Dorsolateral prefrontal cortex (tissue), 120 donors: ENCODE measurements at regions of chr17 and their contacts with region 1.

Region 1: DNA sequence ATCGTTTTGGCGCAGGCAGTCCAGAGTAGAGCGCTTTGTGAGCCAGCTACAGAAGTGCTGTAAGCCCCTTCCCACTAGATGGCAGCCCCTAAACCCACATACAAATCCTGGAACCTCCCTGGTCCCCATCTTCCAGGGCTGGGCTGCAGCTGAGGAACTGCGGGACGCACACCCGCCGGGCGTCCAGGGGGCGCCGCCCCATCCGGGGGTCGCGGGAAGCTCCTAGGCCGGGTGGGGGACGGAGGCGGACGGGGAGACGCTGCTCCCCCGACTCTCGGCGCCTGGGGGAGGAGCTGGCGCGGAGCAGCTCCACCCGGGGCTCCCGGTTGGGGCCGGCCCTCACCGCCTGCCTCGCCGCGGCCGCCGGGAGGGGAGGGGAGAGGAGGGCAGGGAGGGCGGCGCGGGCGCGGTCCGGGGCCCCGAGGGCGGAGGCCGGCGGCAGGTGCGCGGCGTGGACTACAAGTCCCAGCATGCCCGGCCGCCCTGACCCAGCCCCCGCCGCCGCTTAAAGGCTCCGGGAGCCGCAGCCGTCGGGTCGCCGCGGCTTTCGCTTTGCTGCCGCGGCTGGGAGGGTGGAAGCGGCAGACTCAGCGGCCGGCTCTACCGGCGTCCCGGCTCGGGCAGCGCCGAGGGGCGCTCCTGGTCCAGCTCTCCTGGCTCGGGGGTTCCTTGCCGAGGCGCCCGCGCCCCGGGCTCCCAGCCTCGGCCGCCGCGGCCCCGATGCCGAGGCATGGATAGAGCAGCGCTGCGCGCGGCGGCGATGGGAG is at the start of gene KSR1:
- DNase-seq: peak; percentile 67 to 84 (median 77)
- H3K4me3 ChIP-seq: peak within 1 kb of the TSS; percentile 57 to 96 (median 88)
- H3K27ac ChIP-seq: peak within 1 kb of the TSS; percentile 44 to 96 (median 87)
- H3K27me3 ChIP-seq: no peaks in the 10 kb centered on the region
- CTCF ChIP-seq: peak in 55 of 56 donors; percentile 31 to 82 (median 67)
- total RNA-seq, gene KSR1: 44.7 to 102 (median 69.9) TPM

Region 2: DNA sequence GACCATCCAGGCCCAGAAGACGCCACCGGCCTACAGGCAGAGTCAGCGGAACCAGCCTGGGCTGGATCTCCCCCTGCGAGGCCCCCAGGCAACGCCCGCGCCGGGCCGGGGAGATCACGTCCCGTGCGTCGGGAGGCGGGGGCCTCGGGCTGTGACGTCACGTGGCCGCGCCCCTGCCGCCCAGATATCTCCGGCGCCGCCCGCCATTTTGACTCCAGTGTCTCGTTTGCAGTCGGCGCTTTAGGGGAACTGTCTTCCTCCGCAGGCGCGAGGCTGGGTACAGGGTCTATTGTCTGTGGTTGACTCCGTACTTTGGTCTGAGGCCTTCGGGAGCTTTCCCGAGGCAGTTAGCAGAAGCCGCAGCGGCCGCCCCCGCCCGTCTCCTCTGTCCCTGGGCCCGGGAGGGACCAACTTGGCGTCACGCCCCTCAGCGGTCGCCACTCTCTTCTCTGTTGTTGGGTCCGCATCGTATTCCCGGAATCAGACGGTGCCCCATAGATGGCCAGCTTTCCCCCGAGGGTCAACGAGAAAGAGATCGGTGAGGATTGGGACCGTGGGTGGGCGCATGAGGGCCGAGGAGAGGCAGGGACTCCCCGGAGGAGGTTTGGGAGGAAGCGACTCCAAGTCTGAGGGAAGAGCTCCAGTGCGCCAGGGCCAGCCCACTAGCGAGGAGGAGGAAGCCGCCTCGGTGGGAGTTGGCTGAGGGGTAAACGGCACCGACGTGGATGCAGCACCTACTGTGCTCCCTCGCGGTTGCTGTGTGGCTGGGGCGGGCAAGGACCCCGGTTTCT is 162.0 kb before region 1 on chr17 and contains the start of gene WSB1:
- intact Hi-C with region 1: loop called in 1 of 2 experiments (anchors 10 kb)
- DNase-seq: peak; percentile 90 to 96 (median 94)
- H3K4me3 ChIP-seq: peak within 1 kb of the TSS; percentile 63 to 99 (median 92)
- H3K27ac ChIP-seq: peak within 1 kb of the TSS; percentile 76 to 100 (median 99)
- H3K27me3 ChIP-seq: no peaks in the 10 kb centered on the region
- CTCF ChIP-seq: peak in 41 of 56 donors; percentile 2 to 57 (median 30)
- total RNA-seq, gene WSB1: 91.4 to 483 (median 217) TPM

Region 3: DNA sequence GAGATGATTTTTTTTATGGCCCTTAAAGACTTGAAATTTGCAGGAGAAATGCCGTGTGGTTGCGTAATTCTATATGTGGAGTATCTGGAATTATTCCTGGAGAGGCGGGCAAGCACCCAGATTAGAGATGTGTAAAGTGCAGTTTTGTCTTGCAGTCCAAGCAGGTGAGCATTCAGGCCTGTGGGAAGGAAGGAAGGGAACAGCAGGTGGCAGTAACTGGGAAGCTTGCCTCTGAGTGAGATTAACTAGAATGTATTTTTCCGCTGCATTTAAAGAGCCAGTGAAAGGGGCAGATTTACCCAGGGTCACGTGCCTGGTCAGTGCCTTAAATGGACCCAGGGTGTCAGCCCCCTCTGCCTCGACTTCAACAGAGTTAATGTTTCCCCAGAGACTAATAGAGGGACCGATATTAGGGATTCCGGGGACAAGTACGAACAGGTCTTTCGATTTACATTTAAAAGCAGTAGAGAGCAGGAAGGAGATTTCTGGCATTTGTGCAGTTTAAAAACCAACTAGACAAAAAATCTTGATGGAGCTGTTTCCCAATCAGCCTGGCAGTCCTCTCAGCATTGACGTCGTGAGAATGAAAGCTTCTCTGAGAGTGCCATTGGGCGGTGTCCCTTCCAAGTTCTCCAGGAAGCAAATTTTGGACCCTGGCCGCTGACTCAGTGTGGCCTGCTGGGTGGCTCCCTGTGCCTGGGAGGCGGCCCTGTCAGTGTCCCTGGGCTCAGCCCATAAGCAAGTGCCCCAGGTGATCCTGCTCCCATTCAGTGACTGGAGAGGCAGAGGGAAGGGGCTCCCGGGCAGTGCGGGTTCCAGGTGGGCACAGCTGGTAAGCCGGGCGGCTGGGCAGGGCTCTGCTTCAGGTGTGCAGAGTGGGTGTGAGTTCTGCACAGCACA is 38.3 kb after region 1 on chr17:
- intact Hi-C with region 1: loop called (anchors 2 to 5 kb)
- DNase-seq: peak in 6 of 10 donors; percentile 40 to 68 (median 56)
- H3K4me3 ChIP-seq: peak overlapping the region in 44 of 59 donors; percentile 1 to 56 (median 26)
- H3K27ac ChIP-seq: peak overlapping the region in 58 of 59 donors; percentile 21 to 88 (median 73)
- H3K27me3 ChIP-seq: no peaks in the 10 kb centered on the region
- CTCF ChIP-seq: peak in 53 of 56 donors; percentile 20 to 80 (median 58)

Region 4: GRCh38 chr17:27569257-27569722 is 113.2 kb after region 1 on chr17:
- intact Hi-C with region 1: loop called in 1 of 2 experiments (anchors 10 kb)
- DNase-seq: peak in 1 of 10 donors; percentile 27
- H3K4me3 ChIP-seq: no peak overlapping the region
- H3K27ac ChIP-seq: peak overlapping the region in 15 of 59 donors; percentile 6 to 60 (median 35)
- H3K27me3 ChIP-seq: no peaks in the 10 kb centered on the region
- CTCF ChIP-seq: peak in 54 of 56 donors; percentile 23 to 69 (median 55)